Activated T-helper 2 cell treated with anti-CD3 and anti-CD28 coated beads, Interferon-gamma antibody, Interleukin-2, Interleukin-4, amounts not matched to agents 10 μg/mL and 5 μg/mL and 100 μg/mL, durations not matched to agents 14 hours and 24 hours and 36 hours (primary cell): ENCODE measurements at regions of chr14 and their contacts with region 1.

Region 1: DNA sequence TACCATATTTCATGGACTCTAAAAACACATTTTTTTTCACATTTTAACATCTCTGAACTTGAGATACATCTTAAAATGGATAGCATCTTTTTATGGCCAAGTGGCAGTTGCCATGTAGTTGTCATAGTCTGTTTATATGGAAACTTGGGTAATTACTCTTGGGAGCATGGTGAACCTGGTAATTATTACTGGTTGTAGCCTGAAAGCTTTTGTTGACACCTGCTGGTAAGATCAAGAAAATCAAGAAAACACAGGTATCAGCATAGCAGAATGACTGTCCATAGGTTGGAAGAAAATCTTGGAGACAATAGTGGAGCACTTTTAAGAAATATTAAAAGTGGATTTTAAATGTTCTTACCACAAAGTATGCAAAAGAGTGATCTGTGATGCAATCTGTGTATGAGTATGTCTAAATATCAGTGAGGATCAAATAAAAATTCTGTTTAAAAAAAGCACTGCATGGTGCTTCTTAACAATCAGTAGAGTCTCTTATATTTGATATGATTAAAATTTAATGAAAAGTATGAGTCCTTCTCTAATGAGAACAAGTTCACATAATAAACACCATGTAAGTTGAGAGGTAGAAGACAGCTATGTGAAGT is 44.2 kb downstream of the TTC8 start:
- DNase-seq: no peak
- H3K4me3 Mint-ChIP-seq: no peak overlapping the region
- H3K27ac Mint-ChIP-seq: no peak overlapping the region
- H3K4me1 Mint-ChIP-seq: no peaks in the 10 kb centered on the region
- H3K27me3 Mint-ChIP-seq: no peaks in the 10 kb centered on the region

Region 2: GRCh38 chr14:88667555-88668273 is 200.9 kb before region 1 on chr14:
- intact Hi-C with region 1: loop called (anchors 1 kb)
- DNase-seq: peak; percentile 22
- H3K4me3 Mint-ChIP-seq: no peak overlapping the region
- H3K27ac Mint-ChIP-seq: no peak overlapping the region
- H3K4me1 Mint-ChIP-seq: no peaks in the 10 kb centered on the region
- H3K27me3 Mint-ChIP-seq: no peaks in the 10 kb centered on the region